ENCODE measurements at regions of chr6 and their contacts with region 1.

Region 1: GRCh38 chr6:87066449-87067333 is 28.2 kb downstream of the CGA start:
- DNase-seq: peak in 3 of 10 donors; percentile 22 to 31 (median 25)
- H3K4me3 ChIP-seq: peak overlapping the region in 55 of 59 donors; percentile 10 to 65 (median 44)
- H3K27ac ChIP-seq: peak overlapping the region in 1 of 59 donors; percentile 7
- H3K27me3 ChIP-seq: peaks cover 0 to 4% (median 0%) of the 10 kb centered on the region in 45 donors
- CTCF ChIP-seq: peak; percentile 26 to 87 (median 62)

Region 2: GRCh38 chr6:87210979-87211378 is 144.3 kb after region 1 on chr6:
- intact Hi-C with region 1: no loop called
- DNase-seq: no peak
- H3K4me3 ChIP-seq: no peak overlapping the region
- H3K27ac ChIP-seq: no peak overlapping the region
- H3K27me3 ChIP-seq: no peaks in the 10 kb centered on the region
- CTCF ChIP-seq: no peak

Region 3: DNA sequence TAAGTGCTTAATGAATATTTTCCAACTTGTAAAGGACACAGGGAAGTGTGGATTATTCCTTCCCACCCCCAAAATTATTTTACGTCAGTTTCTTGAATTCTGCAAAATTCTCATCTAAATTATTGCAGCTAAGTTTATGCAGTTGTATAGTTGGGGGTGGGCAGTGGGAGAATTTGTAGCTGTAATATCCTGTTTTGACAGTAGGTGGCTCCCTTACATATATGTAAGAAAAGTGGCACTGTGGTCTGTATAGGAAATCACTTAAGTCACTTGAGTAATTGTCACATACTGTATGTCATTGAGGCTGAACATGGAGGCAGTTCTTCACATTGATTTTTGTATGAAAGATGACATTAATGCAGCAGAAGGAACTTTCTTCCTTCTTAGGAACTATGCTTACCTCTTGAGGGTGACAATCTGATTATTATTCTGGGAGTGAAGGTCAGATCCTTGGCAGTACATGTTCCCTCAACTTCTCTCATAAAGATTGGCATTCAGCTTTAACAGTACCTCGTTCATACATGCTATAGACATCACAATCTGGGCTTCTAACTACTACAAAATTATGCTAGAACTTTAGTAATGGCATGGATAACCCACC is 326.4 kb after region 1 on chr6:
- intact Hi-C with region 1: loop called in 1 of 2 experiments (anchors 5 kb)
- DNase-seq: peak in 2 of 10 donors; percentile 19 to 44
- H3K4me3 ChIP-seq: no peak overlapping the region
- H3K27ac ChIP-seq: no peak overlapping the region
- H3K27me3 ChIP-seq: no peaks in the 10 kb centered on the region
- CTCF ChIP-seq: peak; percentile 47 to 92 (median 80)